Esophagus muscularis mucosa (tissue), 4 donors: ENCODE measurements at regions of chr15 and their contacts with region 1.

Region 1: GRCh38 chr15:68210821-68211655 is 5.9 kb upstream of the CALML4 start:
- DNase-seq: no peak
- H3K4me3 ChIP-seq: peak overlapping the region; percentile 24 to 54 (median 38)
- H3K27ac ChIP-seq: peak overlapping the region in 2 of 4 donors; percentile 18 to 71
- H3K4me1 ChIP-seq: peaks cover 14 to 33% (median 25%) of the 10 kb centered on the region in 4 donors
- H3K27me3 ChIP-seq: no peaks in the 10 kb centered on the region
- CTCF ChIP-seq: peak; percentile 93 to 98 (median 95)
- EP300 ChIP-seq: no peak
- POLR2A ChIP-seq: no peak

Region 2: DNA sequence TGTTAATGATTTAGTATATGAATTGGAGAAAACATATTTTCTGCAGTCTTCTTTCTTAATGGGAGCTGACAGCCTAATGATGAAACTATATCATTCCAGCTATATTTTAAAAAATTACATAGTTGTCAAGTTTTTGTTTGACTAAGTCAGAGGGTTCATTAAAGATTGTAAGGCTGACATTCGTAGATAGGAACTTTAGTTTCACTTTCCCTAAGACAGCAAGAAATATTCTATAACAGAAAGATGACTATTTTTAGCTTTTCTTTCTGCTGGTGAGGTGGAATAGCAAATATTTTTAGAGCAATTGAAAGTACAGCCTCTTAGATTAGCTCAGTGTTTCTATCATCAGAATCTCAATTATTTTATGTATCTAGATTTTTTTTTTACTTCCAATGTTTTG is 96.7 kb before region 1 on chr15:
- intact Hi-C with region 1: no loop called
- DNase-seq: no peak
- H3K4me3 ChIP-seq: peak overlapping the region; percentile 33 to 45 (median 38)
- H3K27ac ChIP-seq: peak overlapping the region; percentile 46 to 62 (median 54)
- H3K4me1 ChIP-seq: peaks cover 34 to 50% (median 35%) of the 10 kb centered on the region in 4 donors
- H3K27me3 ChIP-seq: no peaks in the 10 kb centered on the region
- CTCF ChIP-seq: no peak
- EP300 ChIP-seq: no peak
- POLR2A ChIP-seq: no peak

Region 3: DNA sequence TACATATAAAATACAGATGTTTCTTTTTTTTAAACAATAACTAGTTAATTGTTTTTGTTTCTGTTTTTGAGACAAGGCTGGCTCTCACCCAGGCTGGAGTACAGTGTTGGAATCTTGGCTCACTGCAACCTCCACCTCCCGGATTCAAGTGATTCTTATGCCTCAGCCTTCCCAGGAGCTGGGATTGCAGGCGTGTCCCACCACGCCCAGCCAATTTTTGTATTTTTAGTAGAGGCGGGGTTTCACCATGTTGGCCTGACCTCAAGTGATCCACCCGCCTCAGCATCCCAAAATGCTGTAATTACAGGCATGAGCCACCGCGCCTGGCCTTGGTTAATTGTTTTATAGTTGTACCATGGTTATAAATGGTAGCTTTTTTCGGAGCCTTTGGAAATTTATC is 84.6 kb before region 1 on chr15:
- intact Hi-C with region 1: no loop called
- DNase-seq: no peak
- H3K4me3 ChIP-seq: no peak overlapping the region
- H3K27ac ChIP-seq: no peak overlapping the region
- H3K4me1 ChIP-seq: peaks cover 11 to 38% (median 22%) of the 10 kb centered on the region in 4 donors
- H3K27me3 ChIP-seq: no peaks in the 10 kb centered on the region
- CTCF ChIP-seq: no peak
- EP300 ChIP-seq: no peak
- POLR2A ChIP-seq: no peak

Region 4: DNA sequence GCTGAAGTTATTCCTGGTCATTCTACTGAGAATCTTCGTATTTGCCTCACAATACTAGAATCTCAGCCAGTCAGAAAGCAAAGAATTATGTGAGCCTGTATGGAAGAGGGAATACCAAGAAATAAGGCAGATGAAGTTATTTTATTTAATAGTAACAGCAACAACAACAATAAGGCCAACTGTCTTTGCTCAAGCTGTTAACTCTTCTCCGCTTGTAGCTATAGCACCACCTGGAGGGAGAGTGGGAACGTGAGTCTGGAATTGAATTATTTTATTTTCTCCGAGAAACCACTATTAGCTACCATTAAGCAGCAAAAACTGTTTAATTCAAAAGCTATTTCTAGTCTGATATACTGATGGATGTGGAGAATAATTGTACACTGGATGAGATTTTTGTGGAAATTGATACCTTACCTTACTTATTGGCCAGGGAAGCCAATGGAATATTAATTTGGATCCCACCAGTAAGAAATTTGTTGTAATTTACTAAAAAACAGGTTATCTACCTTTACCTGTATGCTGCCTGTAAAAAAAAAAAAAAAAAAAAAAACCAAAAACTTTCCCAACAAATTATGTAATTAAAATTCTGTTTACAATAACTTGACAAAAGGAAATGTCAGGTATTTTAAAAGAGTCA is 56.0 kb before region 1 on chr15:
- intact Hi-C with region 1: loop called (anchors 10 kb)
- DNase-seq: no peak
- H3K4me3 ChIP-seq: no peak overlapping the region
- H3K27ac ChIP-seq: peak overlapping the region in 1 of 4 donors; percentile 67
- H3K4me1 ChIP-seq: peaks cover 17 to 72% (median 61%) of the 10 kb centered on the region in 4 donors
- H3K27me3 ChIP-seq: no peaks in the 10 kb centered on the region
- CTCF ChIP-seq: peak; percentile 78 to 83 (median 80)
- EP300 ChIP-seq: no peak
- POLR2A ChIP-seq: no peak

Region 5: GRCh38 chr15:68166847-68167246 is 44.2 kb before region 1 on chr15:
- intact Hi-C with region 1: no loop called
- DNase-seq: no peak
- H3K4me3 ChIP-seq: no peak overlapping the region
- H3K27ac ChIP-seq: no peak overlapping the region
- H3K4me1 ChIP-seq: peaks cover 0 to 14% (median 7%) of the 10 kb centered on the region in 4 donors
- H3K27me3 ChIP-seq: no peaks in the 10 kb centered on the region
- CTCF ChIP-seq: no peak
- EP300 ChIP-seq: no peak
- POLR2A ChIP-seq: no peak

Region 6: DNA sequence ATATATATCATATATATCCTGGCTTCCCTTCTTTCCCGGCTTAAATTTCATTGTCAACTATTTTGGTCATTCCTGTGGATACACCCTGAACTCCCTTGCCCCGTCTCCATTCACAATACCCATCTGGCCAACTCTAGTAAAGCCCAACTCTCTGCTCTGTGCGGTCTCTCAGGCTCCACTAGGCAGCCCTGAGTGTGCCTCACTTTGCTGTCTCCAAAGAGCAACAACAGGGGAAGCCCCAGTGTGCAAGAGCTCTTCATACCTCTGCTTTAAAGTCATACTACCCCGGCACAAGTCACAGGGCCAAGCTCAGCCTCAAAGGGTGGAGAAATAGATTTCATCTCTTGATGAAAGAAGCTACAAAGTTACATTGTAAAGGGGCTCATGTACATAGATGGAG is 47.7 kb after region 1 on chr15:
- intact Hi-C with region 1: no loop called
- DNase-seq: no peak
- H3K4me3 ChIP-seq: no peak overlapping the region
- H3K27ac ChIP-seq: peak overlapping the region in 2 of 4 donors; percentile 7 to 23
- H3K4me1 ChIP-seq: peaks cover 13 to 25% (median 19%) of the 10 kb centered on the region in 4 donors
- H3K27me3 ChIP-seq: no peaks in the 10 kb centered on the region
- CTCF ChIP-seq: no peak
- EP300 ChIP-seq: no peak
- POLR2A ChIP-seq: no peak